Gastrocnemius medialis (tissue), 4 donors: ENCODE measurements at regions of chr14 and their contacts with region 1.

Region 1: DNA sequence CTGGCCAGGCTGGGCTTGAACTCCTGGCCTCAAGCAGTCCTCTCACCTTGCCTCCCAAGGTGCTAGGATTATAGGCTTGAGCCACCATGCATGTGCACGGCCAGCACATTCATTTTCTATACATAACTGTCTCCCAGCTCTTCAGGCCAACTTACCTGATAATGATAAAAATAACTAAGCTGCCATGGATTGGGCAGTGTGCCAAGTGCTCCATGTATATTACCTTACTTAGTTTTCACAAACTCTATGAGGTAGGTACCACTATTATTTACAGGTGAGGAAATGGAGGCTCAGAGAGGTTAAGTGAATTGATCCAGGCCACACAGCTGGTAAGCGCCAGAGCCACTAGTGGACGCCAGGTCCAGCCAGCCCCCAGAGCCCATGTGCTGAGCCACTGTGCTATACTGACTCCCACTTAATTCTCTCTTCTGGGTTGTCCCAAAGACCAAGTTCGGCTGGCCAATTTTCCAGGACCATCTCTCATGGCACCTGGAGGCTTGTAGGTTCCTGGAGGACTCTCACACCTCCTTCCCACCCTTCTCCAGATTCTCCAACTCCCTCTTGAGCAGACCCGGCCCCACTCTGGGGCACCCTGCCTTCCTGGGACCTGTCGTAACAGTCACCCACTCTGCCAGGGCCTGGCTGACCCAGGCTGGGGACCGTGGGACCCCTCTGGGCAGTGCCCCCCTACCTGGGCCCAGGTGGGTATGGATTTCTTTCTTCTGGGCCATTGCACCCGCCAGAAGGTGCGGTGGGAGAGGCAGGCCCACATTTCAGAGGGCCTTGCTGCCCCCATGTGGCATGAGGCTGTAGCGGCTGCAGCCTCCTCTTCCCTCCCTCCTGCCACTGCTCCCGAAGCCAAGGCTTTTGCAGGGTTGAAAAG is 30.2 kb upstream of the CIPC start:
- DNase-seq: peak; percentile 57 to 70
- ATAC-seq: peak; percentile 70 to 82
- H3K4me3 ChIP-seq: no peak overlapping the region
- H3K27ac ChIP-seq: peak overlapping the region; percentile 30 to 81 (median 47)
- H3K4me1 ChIP-seq: peaks cover 26 to 35% of the 10 kb centered on the region in 2 donors
- H3K27me3 ChIP-seq: no peaks in the 10 kb centered on the region
- CTCF ChIP-seq: peak; percentile 86 to 94 (median 92)
- POLR2A ChIP-seq: no peak

Region 2: DNA sequence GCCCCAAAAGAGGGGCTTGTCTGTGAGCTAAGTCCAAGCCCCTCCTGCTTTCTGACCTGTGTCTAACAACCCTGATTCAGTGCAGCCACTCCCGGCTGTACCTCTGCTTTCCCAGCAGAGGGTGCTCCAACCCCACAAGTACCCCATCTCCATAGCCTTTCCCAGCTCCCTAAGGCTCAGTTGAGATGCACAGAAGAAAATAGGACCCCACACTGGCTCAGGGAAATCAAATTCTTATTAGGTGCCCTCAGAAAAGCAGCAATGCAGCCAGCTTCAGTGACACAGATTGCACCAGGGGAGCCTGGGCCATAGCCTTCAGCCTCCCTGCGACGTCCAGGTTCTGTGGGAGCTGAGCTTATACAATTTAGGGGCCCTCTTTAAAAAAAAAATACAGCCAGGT is 191.8 kb before region 1 on chr14:
- in situ Hi-C with region 1: loop called in 1 of 4 experiments (anchors 5 kb)
- intact Hi-C with region 1: loop called (anchors 1 kb)
- DNase-seq: peak; percentile 31 to 51
- ATAC-seq: peak; percentile 84 to 87
- H3K4me3 ChIP-seq: no peak overlapping the region
- H3K27ac ChIP-seq: no peak overlapping the region
- H3K4me1 ChIP-seq: no peaks in the 10 kb centered on the region
- H3K27me3 ChIP-seq: no peaks in the 10 kb centered on the region
- CTCF ChIP-seq: peak; percentile 86 to 95 (median 90)
- POLR2A ChIP-seq: no peak

Region 3: GRCh38 chr14:76910371-76910890 is 157.4 kb before region 1 on chr14:
- in situ Hi-C with region 1: loop called (anchors 5 to 10 kb)
- intact Hi-C with region 1: loop called (anchors 1 kb)
- DNase-seq: no peak
- ATAC-seq: no peak
- H3K4me3 ChIP-seq: no peak overlapping the region
- H3K27ac ChIP-seq: no peak overlapping the region
- H3K4me1 ChIP-seq: peaks cover 7 to 11% of the 10 kb centered on the region in 2 donors
- H3K27me3 ChIP-seq: no peaks in the 10 kb centered on the region
- CTCF ChIP-seq: no peak
- POLR2A ChIP-seq: no peak

Region 4: GRCh38 chr14:76918751-76919543 is 148.9 kb before region 1 on chr14:
- in situ Hi-C with region 1: loop called (anchors 5 to 10 kb)
- intact Hi-C with region 1: no loop called
- DNase-seq: peak; percentile 96 to 99
- ATAC-seq: peak; percentile 71 to 72
- H3K4me3 ChIP-seq: peak overlapping the region; percentile 7 to 49 (median 32)
- H3K27ac ChIP-seq: peak overlapping the region; percentile 90 to 98 (median 94)
- H3K4me1 ChIP-seq: peaks cover 49% of the 10 kb centered on the region in 2 donors
- H3K27me3 ChIP-seq: no peaks in the 10 kb centered on the region
- CTCF ChIP-seq: no peak
- POLR2A ChIP-seq: peak in 1 of 2 donors; percentile 40

Region 5: GRCh38 chr14:76958980-76959710 is 108.7 kb before region 1 on chr14:
- in situ Hi-C with region 1: no loop called
- intact Hi-C with region 1: no loop called
- DNase-seq: no peak
- ATAC-seq: no peak
- H3K4me3 ChIP-seq: no peak overlapping the region
- H3K27ac ChIP-seq: peak overlapping the region in 1 of 4 donors; percentile 25
- H3K4me1 ChIP-seq: peaks cover 43 to 48% of the 10 kb centered on the region in 2 donors
- H3K27me3 ChIP-seq: no peaks in the 10 kb centered on the region
- CTCF ChIP-seq: no peak
- POLR2A ChIP-seq: no peak

Region 6: GRCh38 chr14:77000340-77001270 is 67.3 kb before region 1 on chr14:
- in situ Hi-C with region 1: no loop called
- intact Hi-C with region 1: loop called (anchors 2 kb)
- DNase-seq: peak; percentile 52 to 87
- ATAC-seq: peak; percentile 95 to 97
- H3K4me3 ChIP-seq: peak overlapping the region; percentile 5 to 46 (median 30)
- H3K27ac ChIP-seq: peak overlapping the region; percentile 73 to 89 (median 85)
- H3K4me1 ChIP-seq: peaks cover 18 to 25% of the 10 kb centered on the region in 2 donors
- H3K27me3 ChIP-seq: no peaks in the 10 kb centered on the region
- CTCF ChIP-seq: no peak
- POLR2A ChIP-seq: no peak

Region 7: DNA sequence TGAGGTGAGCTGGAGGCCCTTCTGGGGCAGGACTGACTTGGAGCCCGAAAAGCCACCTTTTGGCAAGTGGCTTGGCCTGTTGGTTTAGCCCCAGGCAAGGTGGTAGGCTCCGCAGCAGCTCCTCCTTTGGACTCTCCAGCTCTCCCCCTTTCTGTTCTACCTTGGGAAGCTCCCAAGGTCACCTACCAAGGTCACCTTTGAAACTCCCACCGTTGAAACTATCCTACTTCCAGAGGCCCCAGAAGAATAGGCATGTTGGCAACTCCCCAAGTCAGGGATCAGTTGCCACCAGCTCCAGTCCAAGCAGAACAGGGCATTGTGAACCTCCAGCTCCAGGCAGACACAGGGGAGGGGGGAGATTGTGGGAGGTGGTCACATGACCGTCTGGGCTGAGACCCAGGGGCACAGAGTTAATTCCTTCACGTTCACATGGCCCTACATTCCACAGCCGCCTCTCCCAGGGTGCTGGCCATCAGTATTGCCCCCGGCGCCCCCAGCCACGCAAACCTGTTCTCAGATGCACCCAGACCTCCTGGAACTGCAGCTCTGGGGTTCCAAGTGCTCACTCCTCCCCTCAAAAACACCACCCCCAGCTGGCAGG is 53.8 kb before region 1 on chr14:
- in situ Hi-C with region 1: loop called in 1 of 4 experiments (anchors 10 kb)
- intact Hi-C with region 1: no loop called
- DNase-seq: peak in 1 of 2 donors; percentile 72
- ATAC-seq: peak; percentile 80 to 85
- H3K4me3 ChIP-seq: no peak overlapping the region
- H3K27ac ChIP-seq: peak overlapping the region in 3 of 4 donors; percentile 22 to 57 (median 27)
- H3K4me1 ChIP-seq: peaks cover 12 to 14% of the 10 kb centered on the region in 2 donors
- H3K27me3 ChIP-seq: no peaks in the 10 kb centered on the region
- CTCF ChIP-seq: no peak
- POLR2A ChIP-seq: no peak

Region 8: GRCh38 chr14:77028384-77029231 is 39.3 kb before region 1 on chr14 and contains the start of gene IRF2BPL:
- in situ Hi-C with region 1: no loop called
- intact Hi-C with region 1: loop called (anchors 2 kb)
- DNase-seq: peak; percentile 98 to 99
- ATAC-seq: peak; percentile 56 to 59
- H3K4me3 ChIP-seq: peak within 1 kb of the TSS; percentile 53 to 94 (median 88)
- H3K27ac ChIP-seq: peak within 1 kb of the TSS; percentile 95 to 100 (median 100)
- H3K4me1 ChIP-seq: peaks cover 59 to 65% of the 10 kb centered on the region in 2 donors
- H3K27me3 ChIP-seq: no peaks in the 10 kb centered on the region
- CTCF ChIP-seq: no peak
- POLR2A ChIP-seq: peak; percentile 94 to 95
- total RNA-seq, gene IRF2BPL: 15.0 to 26.4 (median 17.0) TPM